ENCODE measurements at regions of chr9 and their contacts with region 1.

Region 1: DNA sequence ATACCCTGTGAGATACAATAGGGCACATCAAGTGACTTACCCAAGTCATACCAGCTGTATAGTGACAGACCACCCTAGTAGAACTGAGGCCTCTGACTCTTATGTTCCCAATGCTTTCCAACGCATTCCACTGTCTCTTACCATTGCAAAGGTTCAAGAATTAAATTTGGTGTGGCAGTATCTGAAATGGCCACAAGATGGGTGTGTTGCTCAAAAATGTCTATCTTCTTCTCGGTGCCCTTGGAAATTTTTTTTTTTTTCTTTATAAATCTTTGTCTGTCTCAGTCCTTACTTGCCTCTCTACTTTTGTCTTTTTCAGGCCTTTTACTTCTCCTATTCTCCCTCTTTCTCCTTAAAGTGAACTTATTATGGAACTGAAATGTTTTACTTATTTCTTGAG is 48.4 kb downstream of the GPR21 start:
- DNase-seq: peak; percentile 50
- H3K4me3 Mint-ChIP-seq: no peak overlapping the region
- H3K27ac Mint-ChIP-seq: peak overlapping the region; percentile 13
- H3K4me1 Mint-ChIP-seq: no peaks in the 10 kb centered on the region
- H3K27me3 Mint-ChIP-seq: no peaks in the 10 kb centered on the region
- CTCF ChIP-seq: peak; percentile 46

Region 2: DNA sequence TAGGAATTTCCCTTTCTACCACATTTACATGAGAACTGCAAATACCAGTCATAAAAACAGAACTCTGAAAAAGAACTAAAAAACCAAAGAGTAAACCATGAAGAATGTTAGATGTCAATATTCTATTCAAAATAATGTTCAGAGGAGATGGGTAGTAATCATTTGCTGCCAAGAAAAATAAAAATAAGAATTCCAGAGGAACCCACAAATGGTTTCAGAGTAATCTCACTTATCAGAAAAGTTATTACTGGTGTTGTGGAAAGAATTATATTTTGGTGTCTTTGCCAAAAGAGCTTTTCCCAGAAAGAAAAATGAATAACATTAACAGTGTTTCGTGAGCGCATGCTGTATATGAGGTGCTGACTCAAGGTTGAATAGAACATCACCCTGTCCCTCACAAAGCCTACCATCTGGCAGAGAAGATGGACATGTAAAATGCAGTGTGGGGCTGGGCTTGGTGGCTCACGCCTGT is 12.8 kb before region 1 on chr9:
- CTCF ChIA-PET with region 1: interaction called, 28 read pairs
- POLR2A ChIA-PET with region 1: interaction called, 4 read pairs
- intact Hi-C with region 1: no loop called
- DNase-seq: peak; percentile 52
- H3K4me3 Mint-ChIP-seq: no peak overlapping the region
- H3K27ac Mint-ChIP-seq: peak overlapping the region; percentile 81
- H3K4me1 Mint-ChIP-seq: peaks cover 26% of the 10 kb centered on the region
- H3K27me3 Mint-ChIP-seq: no peaks in the 10 kb centered on the region
- CTCF ChIP-seq: no peak

Region 3: GRCh38 chr9:123225374-123225813 is 143.6 kb after region 1 on chr9:
- CTCF ChIA-PET with region 1: interaction called, 4 read pairs
- POLR2A ChIA-PET with region 1: no interaction called
- intact Hi-C with region 1: loop called (anchors 1 kb)
- DNase-seq: peak; percentile 71
- H3K4me3 Mint-ChIP-seq: no peak overlapping the region
- H3K27ac Mint-ChIP-seq: no peak overlapping the region
- H3K4me1 Mint-ChIP-seq: peaks cover 21% of the 10 kb centered on the region
- H3K27me3 Mint-ChIP-seq: no peaks in the 10 kb centered on the region
- CTCF ChIP-seq: peak; percentile 41

Region 4: GRCh38 chr9:123391946-123392345 is 310.1 kb after region 1 on chr9:
- CTCF ChIA-PET with region 1: no interaction called
- POLR2A ChIA-PET with region 1: no interaction called
- intact Hi-C with region 1: no loop called
- DNase-seq: no peak
- H3K4me3 Mint-ChIP-seq: no peak overlapping the region
- H3K27ac Mint-ChIP-seq: no peak overlapping the region
- H3K4me1 Mint-ChIP-seq: no peaks in the 10 kb centered on the region
- H3K27me3 Mint-ChIP-seq: no peaks in the 10 kb centered on the region
- CTCF ChIP-seq: no peak

Region 5: GRCh38 chr9:123851851-123852250 is 770.0 kb after region 1 on chr9:
- CTCF ChIA-PET with region 1: no interaction called
- POLR2A ChIA-PET with region 1: no interaction called
- intact Hi-C with region 1: no loop called
- DNase-seq: no peak
- H3K4me3 Mint-ChIP-seq: no peak overlapping the region
- H3K27ac Mint-ChIP-seq: no peak overlapping the region
- H3K4me1 Mint-ChIP-seq: no peaks in the 10 kb centered on the region
- H3K27me3 Mint-ChIP-seq: no peaks in the 10 kb centered on the region
- CTCF ChIP-seq: no peak